ENCODE measurements at regions of chr19 and their contacts with region 1.

Region 1: GRCh38 chr19:18007044-18007916 is 690 bp upstream of the ARRDC2 start:
- DNase-seq: peak; percentile 82
- H3K4me3 Mint-ChIP-seq: peak overlapping the region; percentile 67
- H3K27ac Mint-ChIP-seq: peak overlapping the region; percentile 75
- H3K4me1 Mint-ChIP-seq: peaks cover 40% of the 10 kb centered on the region
- H3K27me3 Mint-ChIP-seq: no peaks in the 10 kb centered on the region

Region 2: DNA sequence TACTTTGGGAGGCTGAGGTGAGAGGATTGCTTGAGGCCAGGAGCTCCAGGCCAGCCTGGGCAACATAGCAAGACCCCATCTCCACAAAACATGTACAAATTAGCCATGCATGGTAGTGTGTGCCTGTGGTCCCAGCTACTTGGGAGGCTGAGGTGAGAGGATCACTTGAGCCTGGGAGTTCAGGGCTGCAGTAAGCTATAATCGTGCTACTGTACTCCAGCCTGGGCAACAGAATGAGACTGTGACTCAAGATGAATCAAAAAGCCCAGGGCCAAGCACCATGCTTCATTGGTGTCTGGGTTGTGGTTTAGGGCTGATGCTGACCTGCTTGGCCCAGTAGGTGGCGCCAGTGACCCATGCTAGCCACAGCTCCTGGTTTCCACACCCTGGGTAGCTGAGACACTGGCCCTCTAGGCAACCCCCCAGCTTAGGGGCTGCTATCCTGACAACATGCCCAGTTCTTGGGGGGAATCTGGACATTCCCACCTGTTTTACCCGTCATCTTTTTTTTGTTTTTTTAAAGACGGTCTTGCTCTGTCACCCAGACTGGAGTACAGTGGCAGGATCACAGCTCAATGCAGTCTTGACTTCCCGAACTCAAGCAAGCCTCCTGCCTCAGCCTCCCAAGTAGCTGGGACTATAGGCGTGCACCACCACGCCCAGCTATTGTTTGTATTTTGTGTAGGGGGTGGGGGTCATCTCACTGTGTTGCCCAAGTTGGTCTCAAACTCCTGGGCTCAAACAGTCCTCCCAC is 69.0 kb before region 1 on chr19:
- CTCF ChIA-PET with region 1: interaction called, 10 read pairs
- POLR2A ChIA-PET with region 1: interaction called, 3 read pairs
- DNase-seq: peak; percentile 87
- H3K4me3 Mint-ChIP-seq: no peak overlapping the region
- H3K27ac Mint-ChIP-seq: no peak overlapping the region
- H3K4me1 Mint-ChIP-seq: peaks cover 8% of the 10 kb centered on the region
- H3K27me3 Mint-ChIP-seq: no peaks in the 10 kb centered on the region

Region 3: GRCh38 chr19:17985037-17985818 is 22.1 kb before region 1 on chr19:
- CTCF ChIA-PET with region 1: no interaction called
- POLR2A ChIA-PET with region 1: no interaction called
- DNase-seq: no peak
- H3K4me3 Mint-ChIP-seq: no peak overlapping the region
- H3K27ac Mint-ChIP-seq: no peak overlapping the region
- H3K4me1 Mint-ChIP-seq: peaks cover 2% of the 10 kb centered on the region
- H3K27me3 Mint-ChIP-seq: peaks cover 5% of the 10 kb centered on the region

Region 4: GRCh38 chr19:18021121-18021755 is 14.0 kb after region 1 on chr19:
- CTCF ChIA-PET with region 1: interaction called, 5 read pairs
- POLR2A ChIA-PET with region 1: interaction called, 11 read pairs
- DNase-seq: peak; percentile 58
- H3K4me3 Mint-ChIP-seq: peak overlapping the region; percentile 79
- H3K27ac Mint-ChIP-seq: peak overlapping the region; percentile 81
- H3K4me1 Mint-ChIP-seq: peaks cover 50% of the 10 kb centered on the region
- H3K27me3 Mint-ChIP-seq: no peaks in the 10 kb centered on the region

Region 5: GRCh38 chr19:18044825-18045304 is 37.6 kb after region 1 on chr19:
- CTCF ChIA-PET with region 1: interaction called, 10 read pairs
- POLR2A ChIA-PET with region 1: interaction called, 17 read pairs
- DNase-seq: peak; percentile 93
- H3K4me3 Mint-ChIP-seq: peak overlapping the region; percentile 35
- H3K27ac Mint-ChIP-seq: peak overlapping the region; percentile 71
- H3K4me1 Mint-ChIP-seq: peaks cover 33% of the 10 kb centered on the region
- H3K27me3 Mint-ChIP-seq: peaks cover 39% of the 10 kb centered on the region

Region 6: GRCh38 chr19:18058208-18059030 is 51.1 kb after region 1 on chr19:
- CTCF ChIA-PET with region 1: interaction called, 51 read pairs
- POLR2A ChIA-PET with region 1: interaction called, 23 read pairs
- DNase-seq: peak; percentile 83
- H3K4me3 Mint-ChIP-seq: no peak overlapping the region
- H3K27ac Mint-ChIP-seq: peak overlapping the region; percentile 55
- H3K4me1 Mint-ChIP-seq: peaks cover 15% of the 10 kb centered on the region
- H3K27me3 Mint-ChIP-seq: no peaks in the 10 kb centered on the region

Measured in activated CD4-positive, alpha-beta memory T cell treated with anti-CD3 and anti-CD28 coated beads, Interleukin-2, amount 10 ng/mL, durations not matched to agents 7 days and 5 days (primary cell).